ENCODE measurements at regions of chr1 and their contacts with region 1.

Region 1: DNA sequence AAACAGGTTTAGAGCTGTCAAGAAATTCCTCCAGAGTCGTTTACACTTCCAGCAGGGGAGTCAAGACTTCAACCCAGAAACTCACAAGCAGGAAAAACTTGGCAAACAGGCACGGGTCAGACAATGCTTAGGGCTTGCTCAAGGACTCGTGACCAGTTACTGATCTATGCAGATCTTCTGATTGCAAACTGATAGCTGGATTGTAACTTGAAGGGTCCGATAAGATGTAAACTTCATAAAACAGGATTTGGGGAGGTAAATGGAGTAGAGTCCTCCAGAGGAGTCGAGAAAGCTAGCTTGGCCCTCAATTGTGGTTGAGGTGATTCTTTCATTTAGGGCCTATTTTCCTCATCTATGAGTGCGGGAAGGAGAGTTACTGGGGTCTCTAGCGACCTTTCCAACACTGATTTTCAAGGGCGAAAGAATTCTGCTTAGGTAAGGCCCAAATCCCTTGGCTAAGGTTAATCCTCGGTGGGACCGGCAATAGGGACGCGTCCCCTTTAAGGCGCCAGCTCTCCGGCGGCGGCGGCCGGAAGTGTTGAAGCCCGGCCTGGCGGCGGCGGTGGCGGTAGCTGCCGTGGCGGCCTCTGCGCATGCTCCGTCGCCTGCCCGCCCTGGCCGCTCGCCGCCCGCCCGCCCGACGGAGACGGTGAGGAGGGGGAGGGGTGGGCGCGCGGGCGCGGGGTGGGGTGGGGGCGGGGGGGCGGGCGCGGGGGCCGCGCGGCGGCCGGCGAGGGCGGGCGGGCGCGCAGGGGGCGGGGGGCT is at the start of gene GMEB1:
- DNase-seq: peak; percentile 88
- H3K4me3 Mint-ChIP-seq: peak within 1 kb of the TSS; percentile 87
- H3K27ac Mint-ChIP-seq: peak within 1 kb of the TSS; percentile 90
- H3K4me1 Mint-ChIP-seq: peaks cover 13% of the 10 kb centered on the region
- H3K27me3 Mint-ChIP-seq: no peaks in the 10 kb centered on the region
- CTCF ChIP-seq: no peak
- total RNA-seq, gene GMEB1: 9.1 and 13.3 TPM in 2 replicates

Region 2: GRCh38 chr1:28648474-28649198 is 19.7 kb before region 1 on chr1 and contains the start of gene RNU11:
- CTCF ChIA-PET with region 1: interaction called, 5 read pairs
- POLR2A ChIA-PET with region 1: interaction called, 94 read pairs
- intact Hi-C with region 1: no loop called
- DNase-seq: peak; percentile 97
- H3K4me3 Mint-ChIP-seq: peak within 1 kb of the TSS; percentile 77
- H3K27ac Mint-ChIP-seq: peak within 1 kb of the TSS; percentile 100
- H3K4me1 Mint-ChIP-seq: peaks cover 25% of the 10 kb centered on the region
- H3K27me3 Mint-ChIP-seq: no peaks in the 10 kb centered on the region
- CTCF ChIP-seq: no peak
- total RNA-seq, gene RNU11: not detected in 2 replicates

Region 3: GRCh38 chr1:28682840-28683239 is 14.5 kb after region 1 on chr1:
- CTCF ChIA-PET with region 1: interaction called, 3 read pairs
- POLR2A ChIA-PET with region 1: interaction called, 13 read pairs
- intact Hi-C with region 1: no loop called
- DNase-seq: no peak
- H3K4me3 Mint-ChIP-seq: no peak overlapping the region
- H3K27ac Mint-ChIP-seq: no peak overlapping the region
- H3K4me1 Mint-ChIP-seq: no peaks in the 10 kb centered on the region
- H3K27me3 Mint-ChIP-seq: no peaks in the 10 kb centered on the region
- CTCF ChIP-seq: no peak